Activated CD4-positive, alpha-beta memory T cell treated with anti-CD3 and anti-CD28 coated beads for 36 hours (primary cell): ENCODE measurements at regions of chr15 and their contacts with region 1.

Region 1: DNA sequence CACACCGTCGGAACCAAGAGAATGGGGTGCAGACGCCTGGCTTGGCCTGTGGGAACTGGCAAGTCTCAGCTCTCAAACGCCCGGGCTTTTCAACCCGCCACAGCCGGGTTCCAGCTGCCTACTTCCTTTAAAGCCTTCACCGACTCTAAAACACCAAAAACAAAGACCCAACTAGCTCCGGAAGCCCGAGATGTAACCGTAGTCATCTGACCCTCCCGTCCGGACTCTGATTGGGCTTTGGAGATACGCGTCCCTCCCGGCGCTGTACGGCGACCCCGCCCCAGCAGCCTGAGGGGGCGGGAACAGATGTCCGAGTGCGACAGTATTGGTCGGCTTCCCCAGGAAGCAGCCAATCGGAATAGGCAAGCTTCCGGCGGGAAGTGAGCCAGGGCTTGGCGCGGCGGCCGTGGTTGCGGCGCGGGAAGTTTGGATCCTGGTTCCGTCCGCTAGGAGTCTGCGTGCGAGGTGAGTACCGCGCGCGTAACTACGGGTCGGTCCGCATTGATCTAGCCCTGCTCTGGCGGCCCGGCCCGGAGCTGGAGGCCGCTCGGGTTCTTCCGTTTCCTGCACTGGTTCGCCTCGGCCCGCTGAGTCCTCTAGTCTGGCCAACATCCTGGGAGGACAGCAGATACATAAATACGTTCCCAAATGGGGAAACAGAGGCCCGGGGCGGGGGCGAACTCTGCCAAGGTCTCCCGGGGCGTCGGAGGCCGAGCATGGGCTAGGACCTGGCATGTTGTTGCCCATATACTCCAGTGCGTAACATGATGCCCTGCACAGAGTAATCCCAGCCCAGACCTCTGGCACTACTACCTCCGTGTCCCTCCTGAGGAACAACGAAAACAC is at the start of gene BLM:
- DNase-seq: peak; percentile 97
- H3K4me3 Mint-ChIP-seq: peak within 1 kb of the TSS; percentile 84
- H3K27ac Mint-ChIP-seq: peak within 1 kb of the TSS; percentile 91
- H3K4me1 Mint-ChIP-seq: peaks cover 24% of the 10 kb centered on the region
- H3K27me3 Mint-ChIP-seq: no peaks in the 10 kb centered on the region
- total RNA-seq, gene BLM: 65.6 to 68.7 TPM

Region 2: DNA sequence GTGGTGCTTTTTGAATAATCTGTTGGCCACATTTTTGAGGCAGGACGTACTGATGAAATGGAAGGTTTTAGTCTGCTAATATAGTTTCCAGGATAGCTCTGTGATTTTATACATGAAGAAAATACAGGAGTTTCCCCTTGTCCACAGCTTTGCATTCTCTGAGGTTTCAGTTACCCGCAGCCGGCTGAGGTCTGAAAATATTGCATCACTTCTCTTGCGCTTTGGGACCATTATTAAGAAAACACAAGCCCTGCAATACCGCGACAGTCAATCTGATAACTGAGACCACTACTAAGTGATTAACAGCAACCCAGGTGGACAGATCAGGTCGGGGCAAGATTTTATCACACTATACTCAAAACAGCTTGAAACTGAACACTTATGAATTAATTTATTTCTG is 33.0 kb after region 1 on chr15:
- CTCF ChIA-PET with region 1: no interaction called
- POLR2A ChIA-PET with region 1: interaction called, 9 read pairs
- intact Hi-C with region 1: loop called (anchors 1 kb)
- DNase-seq: peak; percentile 73
- H3K4me3 Mint-ChIP-seq: peak overlapping the region; percentile 39
- H3K27ac Mint-ChIP-seq: peak overlapping the region; percentile 87
- H3K4me1 Mint-ChIP-seq: peaks cover 26% of the 10 kb centered on the region
- H3K27me3 Mint-ChIP-seq: no peaks in the 10 kb centered on the region

Region 3: GRCh38 chr15:90799639-90800170 is 82.5 kb after region 1 on chr15:
- CTCF ChIA-PET with region 1: no interaction called
- POLR2A ChIA-PET with region 1: no interaction called
- intact Hi-C with region 1: no loop called
- DNase-seq: no peak
- H3K4me3 Mint-ChIP-seq: no peak overlapping the region
- H3K27ac Mint-ChIP-seq: no peak overlapping the region
- H3K4me1 Mint-ChIP-seq: no peaks in the 10 kb centered on the region
- H3K27me3 Mint-ChIP-seq: no peaks in the 10 kb centered on the region